ENCODE measurements at regions of chr19 and their contacts with region 1.

Region 1: DNA sequence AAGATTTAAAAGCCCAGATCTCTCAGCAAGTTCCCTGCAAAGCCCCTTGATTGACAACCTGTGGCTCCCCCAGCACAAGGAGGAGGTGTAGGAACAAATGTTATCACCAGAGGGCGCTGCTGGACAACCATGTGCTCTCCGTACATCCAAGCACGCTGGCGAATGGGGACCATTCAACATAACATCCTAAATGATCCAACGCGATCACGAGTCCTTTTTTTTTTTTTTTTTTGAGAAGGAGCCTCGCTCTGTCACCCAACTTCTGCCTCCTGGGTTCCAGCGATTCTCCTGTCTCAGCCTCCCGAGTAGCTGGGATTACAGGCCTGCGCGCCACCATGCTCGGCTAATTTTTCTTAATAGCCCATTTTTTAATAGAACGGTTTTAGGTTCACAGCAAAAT is 52.0 kb downstream of the NWD1 start:
- DNase-seq: peak; percentile 88
- H3K4me3 Mint-ChIP-seq: no peak overlapping the region
- H3K27ac Mint-ChIP-seq: no peak overlapping the region
- H3K4me1 Mint-ChIP-seq: no peaks in the 10 kb centered on the region
- H3K27me3 Mint-ChIP-seq: no peaks in the 10 kb centered on the region
- CTCF ChIP-seq: peak; percentile 89

Region 2: DNA sequence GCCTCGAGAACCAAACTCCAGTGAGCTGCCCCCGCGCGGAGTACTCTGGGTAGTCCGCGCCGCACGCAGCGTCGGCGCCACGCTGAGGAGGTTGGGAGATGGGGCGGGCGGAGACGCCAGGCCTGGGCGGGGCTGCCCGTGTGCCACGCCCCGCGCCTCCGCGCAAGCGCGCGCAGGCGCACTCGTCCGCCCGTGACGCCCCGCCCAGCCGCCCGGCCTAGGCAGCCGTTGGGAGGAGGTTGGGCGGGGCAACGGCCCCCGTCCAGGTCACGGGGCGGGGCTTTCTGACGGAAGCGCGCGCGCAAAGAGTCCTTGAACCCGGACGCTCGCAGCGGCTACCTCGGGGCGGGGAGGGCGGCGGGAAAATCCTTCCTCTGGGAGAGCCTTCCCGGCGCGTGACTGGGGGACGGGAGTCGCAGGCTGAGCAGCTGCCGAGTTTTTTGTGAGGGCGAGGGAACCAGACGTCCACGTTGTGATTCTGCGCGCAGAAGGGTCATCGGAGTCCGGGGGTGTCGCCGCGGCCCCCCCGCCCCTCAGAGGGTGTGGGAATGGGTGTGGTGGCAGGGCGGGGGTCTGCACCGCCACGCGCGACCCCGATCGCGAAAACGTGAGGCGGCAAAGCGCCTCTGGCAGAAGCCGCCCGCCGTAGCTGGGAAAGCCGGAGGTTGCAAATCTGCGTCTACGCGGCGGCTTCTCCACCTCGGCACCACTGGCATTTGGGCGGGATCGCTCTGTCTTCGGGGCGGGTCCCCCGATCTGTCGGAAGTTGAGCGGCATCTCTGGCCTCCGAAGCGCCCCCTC is 143.2 kb before region 1 on chr19 and contains the start of gene MED26:
- CTCF ChIA-PET with region 1: no interaction called
- POLR2A ChIA-PET with region 1: no interaction called
- intact Hi-C with region 1: no loop called
- DNase-seq: peak; percentile 92
- H3K4me3 Mint-ChIP-seq: peak within 1 kb of the TSS; percentile 92
- H3K27ac Mint-ChIP-seq: peak within 1 kb of the TSS; percentile 95
- H3K4me1 Mint-ChIP-seq: peaks cover 20% of the 10 kb centered on the region
- H3K27me3 Mint-ChIP-seq: no peaks in the 10 kb centered on the region
- CTCF ChIP-seq: no peak
- total RNA-seq, gene MED26: 11.1 and 12.9 TPM in 2 replicates

Region 3: GRCh38 chr19:16860118-16860517 is 88.5 kb after region 1 on chr19:
- CTCF ChIA-PET with region 1: no interaction called
- POLR2A ChIA-PET with region 1: no interaction called
- intact Hi-C with region 1: no loop called
- DNase-seq: no peak
- H3K4me3 Mint-ChIP-seq: no peak overlapping the region
- H3K27ac Mint-ChIP-seq: no peak overlapping the region
- H3K4me1 Mint-ChIP-seq: no peaks in the 10 kb centered on the region
- H3K27me3 Mint-ChIP-seq: no peaks in the 10 kb centered on the region
- CTCF ChIP-seq: no peak

Region 4: DNA sequence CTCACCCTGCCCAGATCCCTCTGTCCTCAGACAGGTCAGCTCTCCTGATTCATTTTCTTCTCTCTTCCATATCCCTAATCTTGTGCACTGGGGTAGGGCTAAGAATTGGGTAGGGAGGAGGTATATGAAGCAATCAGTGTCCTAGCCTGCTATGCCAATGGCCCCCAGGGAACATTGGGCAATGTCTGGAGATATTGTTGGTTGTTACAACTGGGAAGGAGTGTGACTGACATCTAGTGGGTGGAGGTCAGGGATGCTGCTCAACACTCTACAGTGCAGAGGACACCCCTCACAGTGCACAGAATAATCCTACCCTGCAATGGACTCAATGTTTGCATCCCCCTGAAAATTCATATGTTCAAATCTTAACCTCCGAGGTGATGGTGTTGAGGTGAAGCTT is 197.5 kb after region 1 on chr19:
- CTCF ChIA-PET with region 1: interaction called, 25 read pairs
- POLR2A ChIA-PET with region 1: no interaction called
- intact Hi-C with region 1: no loop called
- DNase-seq: peak; percentile 89
- H3K4me3 Mint-ChIP-seq: no peak overlapping the region
- H3K27ac Mint-ChIP-seq: no peak overlapping the region
- H3K4me1 Mint-ChIP-seq: no peaks in the 10 kb centered on the region
- H3K27me3 Mint-ChIP-seq: peaks cover 11% of the 10 kb centered on the region
- CTCF ChIP-seq: peak; percentile 9

Region 5: DNA sequence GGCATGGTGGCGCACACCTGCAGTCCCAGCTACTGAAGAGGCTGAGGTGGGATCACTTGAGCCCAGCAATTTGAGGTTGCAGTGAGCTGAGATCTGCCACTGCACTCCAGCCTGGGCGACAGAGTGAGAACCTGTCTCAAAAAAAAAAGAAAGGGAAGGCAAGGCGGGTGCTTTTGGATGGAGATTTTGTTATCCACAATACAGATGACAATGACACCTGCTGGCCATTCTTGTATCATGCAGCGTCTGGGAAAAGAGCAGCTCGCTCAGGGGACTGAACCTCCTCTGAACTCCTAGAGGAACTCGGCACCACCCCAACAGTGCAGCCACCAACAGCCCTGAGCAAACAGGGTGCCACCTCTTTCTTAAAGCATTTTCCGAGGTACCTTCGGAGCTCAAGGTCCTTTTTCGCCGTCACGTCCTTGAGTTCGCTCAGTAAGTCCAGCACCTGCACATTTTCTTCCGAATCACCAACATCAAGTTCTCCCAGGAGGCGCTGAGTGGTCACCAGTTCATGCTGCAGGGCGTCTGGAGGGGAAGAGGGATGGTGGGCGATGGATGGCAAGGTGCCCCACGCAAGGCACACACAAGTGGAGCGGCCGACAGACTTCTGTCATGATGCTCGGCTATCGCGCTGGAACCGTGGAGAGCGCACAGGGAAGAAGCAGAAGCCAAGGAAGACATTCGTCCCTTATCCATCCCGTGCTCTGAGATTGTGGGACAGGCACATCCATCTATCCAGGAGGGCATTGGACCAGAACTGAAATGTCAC is 281.0 kb after region 1 on chr19:
- CTCF ChIA-PET with region 1: interaction called, 11 read pairs
- POLR2A ChIA-PET with region 1: no interaction called
- intact Hi-C with region 1: loop called (anchors 1 kb)
- DNase-seq: peak; percentile 63
- H3K4me3 Mint-ChIP-seq: no peak overlapping the region
- H3K27ac Mint-ChIP-seq: no peak overlapping the region
- H3K4me1 Mint-ChIP-seq: no peaks in the 10 kb centered on the region
- H3K27me3 Mint-ChIP-seq: no peaks in the 10 kb centered on the region
- CTCF ChIP-seq: peak; percentile 65